ENCODE measurements at regions of chr5 and their contacts with region 1.

Region 1: DNA sequence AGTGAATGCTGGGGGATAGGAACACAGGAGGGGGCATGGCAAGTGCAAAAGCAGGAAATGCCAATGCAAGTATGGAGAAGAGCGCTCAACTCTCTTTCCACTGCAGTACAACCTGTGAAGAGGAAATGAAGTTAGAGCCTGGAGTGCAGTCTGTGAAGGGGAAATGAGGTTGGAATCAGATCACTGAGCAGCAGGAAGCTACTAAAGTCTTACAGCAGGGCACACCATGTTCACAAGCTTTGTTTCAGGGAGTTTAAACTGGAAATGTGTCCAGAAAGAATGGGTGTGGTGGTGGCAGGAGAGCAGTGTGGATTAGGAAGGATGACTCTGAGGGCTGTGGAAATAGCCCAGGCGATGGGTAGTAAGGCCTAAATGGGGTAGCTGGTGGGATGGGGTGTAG is 15.4 kb downstream of the ARHGEF37 start:
- DNase-seq: no peak
- H3K4me3 ChIP-seq: no peak overlapping the region
- H3K27ac ChIP-seq: no peak overlapping the region
- H3K4me1 ChIP-seq: peaks cover 0 to 3% (median 0%) of the 10 kb centered on the region in 4 experiments; a peak in 2 of 7 replicates
- H3K27me3 ChIP-seq: no peaks in the 10 kb centered on the region
- CTCF ChIP-seq: no peak
- EP300 ChIP-seq: no peak
- POLR2A ChIP-seq: no peak
- RAD21 ChIP-seq: no peak

Region 2: DNA sequence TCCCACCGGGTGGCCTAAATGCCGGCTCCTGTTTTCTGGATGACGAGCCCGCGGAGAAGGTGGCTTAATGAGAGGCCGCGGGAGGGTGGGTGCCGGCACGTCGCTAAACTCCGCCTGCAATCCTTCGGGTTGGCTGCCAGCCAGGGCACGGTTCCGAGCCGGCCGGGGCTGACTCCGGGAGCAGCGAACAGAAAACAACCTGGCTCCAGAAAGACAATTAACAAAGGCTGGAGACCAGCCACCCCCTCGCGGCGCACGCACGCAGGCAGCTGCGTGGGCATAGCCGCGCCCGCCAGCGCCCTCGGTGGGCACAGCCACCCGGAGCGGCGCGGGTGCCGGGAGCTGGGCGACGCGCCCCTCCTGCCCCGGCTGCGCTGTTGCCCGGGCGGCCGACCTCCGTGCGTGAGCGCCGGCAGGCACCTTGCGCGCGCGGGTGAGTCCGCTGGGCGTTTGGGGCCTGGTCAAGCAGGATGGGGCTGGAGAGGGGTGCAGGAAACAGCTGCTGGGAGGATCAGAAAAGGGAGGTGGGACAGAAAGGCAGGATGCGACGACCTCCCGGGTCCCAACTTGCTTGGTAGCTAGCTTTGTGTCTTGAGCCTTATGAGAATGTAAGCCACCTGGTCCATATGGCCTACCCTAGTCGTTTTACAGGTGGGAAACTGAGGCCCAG is 15.4 kb before region 1 on chr5 and contains the start of gene ARHGEF37:
- CTCF ChIA-PET with region 1: interaction called, 14 read pairs
- POLR2A ChIA-PET with region 1: interaction called, 3 read pairs
- DNase-seq: peak in 1 of 2 experiments; percentile 73
- H3K4me3 ChIP-seq: peak within 1 kb of the TSS; percentile 44 to 64 (median 50)
- H3K27ac ChIP-seq: no peak within 1 kb of the TSS
- H3K4me1 ChIP-seq: peaks cover 0 to 14% (median 5%) of the 10 kb centered on the region in 4 experiments; a peak in 6 of 7 replicates
- H3K27me3 ChIP-seq: peaks cover 0 to 18% (median 13%) of the 10 kb centered on the region in 4 experiments; a peak in 6 of 7 replicates
- CTCF ChIP-seq: no peak
- EP300 ChIP-seq: no peak
- POLR2A ChIP-seq: no peak
- RAD21 ChIP-seq: no peak
- total RNA-seq, gene ARHGEF37: 0.48 and 1.8 TPM in 2 replicates

Region 3: DNA sequence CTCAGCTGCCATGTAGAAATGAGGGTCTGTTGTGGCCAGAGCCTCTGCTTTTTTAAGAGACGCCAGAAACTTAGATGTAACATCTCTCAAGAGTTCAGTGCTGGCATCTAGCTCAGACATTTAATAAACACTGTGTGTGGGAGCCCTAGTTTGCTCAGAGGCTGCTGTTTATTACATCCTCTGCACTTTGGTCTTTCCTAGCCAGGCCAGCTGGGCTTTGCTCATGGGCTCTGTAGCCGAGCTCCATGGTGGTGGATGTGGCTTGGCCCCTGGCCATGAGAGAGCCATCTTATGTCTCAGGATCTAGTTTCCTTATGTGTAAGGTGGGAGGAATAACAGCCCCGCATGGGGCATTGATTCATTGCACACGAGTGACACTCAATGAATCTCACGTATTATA is 14.6 kb after region 1 on chr5:
- CTCF ChIA-PET with region 1: interaction called, 19 read pairs
- POLR2A ChIA-PET with region 1: interaction called, 3 read pairs
- DNase-seq: no peak
- H3K4me3 ChIP-seq: no peak overlapping the region
- H3K27ac ChIP-seq: no peak overlapping the region
- H3K4me1 ChIP-seq: no peaks in the 10 kb centered on the region; a peak in 1 of 7 replicates
- H3K27me3 ChIP-seq: no peaks in the 10 kb centered on the region
- CTCF ChIP-seq: no peak
- EP300 ChIP-seq: no peak
- POLR2A ChIP-seq: no peak
- RAD21 ChIP-seq: no peak